Astrocyte of the cerebellum (primary cell): ENCODE measurements at regions of chr6 and their contacts with region 1.

Region 1: DNA sequence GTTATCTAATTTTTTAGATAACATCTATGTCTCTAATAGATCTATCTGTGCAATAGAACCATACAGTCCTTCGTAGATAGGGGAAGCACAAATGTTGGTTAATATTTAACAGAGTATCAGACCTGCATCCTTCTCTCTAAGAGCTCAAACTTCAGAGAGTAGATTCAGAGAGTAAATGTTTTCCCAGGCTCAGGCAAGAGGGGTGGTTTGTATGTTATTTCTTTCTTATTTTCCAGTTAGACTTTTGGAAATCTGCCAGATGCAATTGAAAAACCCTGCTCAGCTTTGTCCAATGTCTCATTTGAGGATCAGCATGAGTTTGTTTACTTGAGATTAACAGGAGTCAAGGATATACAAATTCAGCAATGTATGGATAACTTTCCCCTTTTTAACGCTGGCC is 361.9 kb downstream of the BCKDHB start:
- DNase-seq: no peak
- H3K4me3 ChIP-seq: no peak overlapping the region
- CTCF ChIP-seq: no peak

Region 2: DNA sequence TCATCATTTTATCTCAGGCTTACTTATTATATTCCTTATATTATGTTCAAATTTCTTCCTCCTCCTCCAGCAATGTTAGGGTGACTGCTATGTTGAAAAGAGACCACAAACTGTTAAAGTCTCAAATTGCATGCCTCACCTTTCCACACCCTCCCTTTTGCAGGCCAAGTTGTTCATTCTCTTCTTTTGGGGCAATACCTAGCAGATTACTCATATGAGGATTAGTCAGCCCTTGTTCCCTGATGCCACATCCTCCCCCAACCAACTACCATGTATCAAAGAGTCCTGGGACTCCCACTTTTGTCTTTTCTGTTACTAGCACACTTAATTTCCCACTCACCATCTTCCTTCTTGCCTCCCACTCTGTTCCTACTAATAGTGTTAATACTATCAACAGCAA is 72.8 kb after region 1 on chr6:
- in situ Hi-C with region 1: loop called (anchors 5 kb)
- DNase-seq: peak; percentile 48
- H3K4me3 ChIP-seq: no peak overlapping the region
- CTCF ChIP-seq: no peak